ENCODE measurements at regions of chr7 and their contacts with region 1.

Region 1: GRCh38 chr7:4758111-4758510 is 17.3 kb upstream of the AP5Z1 start:
- DNase-seq: no peak
- ATAC-seq: no peak
- H3K4me3 ChIP-seq: no peak overlapping the region
- H3K27ac ChIP-seq: no peak overlapping the region
- H3K4me1 ChIP-seq: no peaks in the 10 kb centered on the region
- H3K27me3 ChIP-seq: no peaks in the 10 kb centered on the region
- CTCF ChIP-seq: no peak

Region 2: GRCh38 chr7:4338556-4338955 is 419.6 kb before region 1 on chr7:
- CTCF ChIA-PET with region 1: no interaction called
- POLR2A ChIA-PET with region 1: interaction called, 15 read pairs
- in situ Hi-C with region 1: no loop called
- intact Hi-C with region 1: no loop called
- DNase-seq: no peak
- ATAC-seq: no peak
- H3K4me3 ChIP-seq: no peak overlapping the region
- H3K27ac ChIP-seq: no peak overlapping the region
- H3K4me1 ChIP-seq: no peaks in the 10 kb centered on the region
- H3K27me3 ChIP-seq: peaks cover 2% of the 10 kb centered on the region; the same call in 1 of the 2 replicates
- CTCF ChIP-seq: no peak

Region 3: DNA sequence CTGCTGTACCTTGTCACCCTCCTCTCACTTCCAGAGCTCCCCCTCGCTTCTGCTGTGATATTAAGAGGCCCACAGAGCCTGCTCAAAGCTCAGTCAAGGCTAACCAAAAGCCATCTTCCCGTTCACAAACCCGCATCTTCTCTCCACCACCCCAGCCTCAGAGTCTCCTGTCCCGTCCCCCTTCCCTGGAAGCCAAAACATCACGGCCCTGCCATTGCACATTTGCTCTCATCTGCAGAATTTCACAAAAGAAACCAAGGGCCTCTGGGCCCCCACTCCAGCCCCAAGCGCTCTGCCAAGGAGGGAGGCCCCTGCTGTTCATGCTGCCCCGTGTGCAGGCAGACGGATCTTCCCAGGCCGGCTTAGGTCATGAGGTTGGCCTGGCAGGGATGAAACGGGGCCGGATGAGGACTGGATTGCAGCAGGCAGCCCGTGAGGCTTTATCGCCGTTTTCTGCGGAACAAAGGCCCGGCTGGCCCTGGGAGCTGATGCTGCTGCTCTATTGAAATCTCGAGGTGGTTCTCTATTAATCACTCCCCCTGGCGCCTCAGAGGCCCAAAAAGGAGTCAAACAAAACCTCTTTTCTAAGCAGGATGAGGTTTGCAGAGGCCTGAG is 107.6 kb before region 1 on chr7:
- CTCF ChIA-PET with region 1: no interaction called
- POLR2A ChIA-PET with region 1: no interaction called
- in situ Hi-C with region 1: no loop called
- intact Hi-C with region 1: no loop called
- DNase-seq: no peak
- ATAC-seq: peak; percentile 58
- H3K4me3 ChIP-seq: no peak overlapping the region
- H3K27ac ChIP-seq: no peak overlapping the region
- H3K4me1 ChIP-seq: no peaks in the 10 kb centered on the region
- H3K27me3 ChIP-seq: no peaks in the 10 kb centered on the region
- CTCF ChIP-seq: no peak

Region 4: GRCh38 chr7:4775250-4775847 is 17.2 kb after region 1 on chr7 and contains the start of gene AP5Z1:
- CTCF ChIA-PET with region 1: no interaction called
- POLR2A ChIA-PET with region 1: interaction called, 10 read pairs
- in situ Hi-C with region 1: no loop called
- intact Hi-C with region 1: no loop called
- DNase-seq: peak; percentile 78
- ATAC-seq: peak; percentile 96
- H3K4me3 ChIP-seq: peak within 1 kb of the TSS; percentile 85 to 98
- H3K27ac ChIP-seq: peak within 1 kb of the TSS; percentile 93
- H3K4me1 ChIP-seq: peaks cover 23% of the 10 kb centered on the region
- H3K27me3 ChIP-seq: no peaks in the 10 kb centered on the region
- CTCF ChIP-seq: no peak
- total RNA-seq, gene AP5Z1: 100.0 TPM

Region 5: GRCh38 chr7:4837803-4838625 is 79.9 kb after region 1 on chr7:
- CTCF ChIA-PET with region 1: no interaction called
- POLR2A ChIA-PET with region 1: no interaction called
- in situ Hi-C with region 1: no loop called
- intact Hi-C with region 1: no loop called
- DNase-seq: no peak
- ATAC-seq: no peak
- H3K4me3 ChIP-seq: no peak overlapping the region
- H3K27ac ChIP-seq: no peak overlapping the region
- H3K4me1 ChIP-seq: 0 out of 2 replicates have a peak, but pooled peaks cover 3% of the 10 kb centered on the region
- H3K27me3 ChIP-seq: no peaks in the 10 kb centered on the region
- CTCF ChIP-seq: no peak